ENCODE measurements at regions of chr13 and their contacts with region 1.

Region 1: DNA sequence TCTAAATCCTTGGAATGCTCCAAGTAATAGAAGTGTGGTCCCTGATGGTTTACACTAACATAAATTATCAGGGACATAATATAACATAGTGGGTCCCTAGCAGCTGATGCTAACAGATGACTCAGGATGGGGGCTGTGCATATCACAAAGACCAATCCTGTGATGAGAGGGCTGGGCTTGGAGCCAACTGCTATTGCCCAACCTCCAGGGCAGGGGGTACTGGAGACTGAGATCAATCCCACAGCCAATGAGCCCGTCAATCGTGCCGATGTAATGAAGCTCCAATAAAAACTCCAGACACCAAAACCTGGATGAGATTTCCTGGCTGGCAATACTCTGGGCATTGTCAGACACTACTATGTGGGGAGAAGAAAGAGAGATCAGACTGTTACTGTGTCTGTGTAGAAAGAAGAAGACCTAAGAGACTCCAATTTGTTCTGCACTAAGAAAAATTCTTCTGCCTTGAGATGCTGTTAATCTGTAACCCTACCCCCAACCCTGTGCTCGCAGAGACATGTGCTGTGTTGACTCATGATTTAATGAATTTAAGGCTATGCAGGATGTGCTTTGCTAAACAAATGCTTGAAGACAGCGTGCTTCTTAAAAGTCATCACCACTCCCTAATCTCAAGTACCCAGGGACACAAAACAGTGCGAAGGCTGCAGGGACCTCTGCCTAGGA is 33.4 kb downstream of the ABCC4 start:
- DNase-seq: peak; percentile 40
- H3K4me3 ChIP-seq: no peak overlapping the region
- H3K27ac ChIP-seq: peak overlapping the region; percentile 48
- H3K4me1 ChIP-seq: peaks cover 47% of the 10 kb centered on the region
- H3K27me3 ChIP-seq: no peaks in the 10 kb centered on the region
- CTCF ChIP-seq: no peak
- POLR2A ChIP-seq: no peak

Region 2: GRCh38 chr13:95256086-95256485 is 11.7 kb before region 1 on chr13:
- CTCF ChIA-PET with region 1: interaction called, 7 read pairs
- POLR2A ChIA-PET with region 1: no interaction called
- dilution Hi-C with region 1: no loop called
- intact Hi-C with region 1: loop called (anchors 1 kb)
- DNase-seq: peak; percentile 85
- H3K4me3 ChIP-seq: no peak overlapping the region
- H3K27ac ChIP-seq: peak overlapping the region; percentile 47
- H3K4me1 ChIP-seq: peaks cover 36% of the 10 kb centered on the region
- H3K27me3 ChIP-seq: no peaks in the 10 kb centered on the region
- CTCF ChIP-seq: no peak
- POLR2A ChIP-seq: no peak

Measured in endothelial cell of umbilical vein (primary cell).